ENCODE measurements at regions of chr1 and their contacts with region 1.

Region 1: DNA sequence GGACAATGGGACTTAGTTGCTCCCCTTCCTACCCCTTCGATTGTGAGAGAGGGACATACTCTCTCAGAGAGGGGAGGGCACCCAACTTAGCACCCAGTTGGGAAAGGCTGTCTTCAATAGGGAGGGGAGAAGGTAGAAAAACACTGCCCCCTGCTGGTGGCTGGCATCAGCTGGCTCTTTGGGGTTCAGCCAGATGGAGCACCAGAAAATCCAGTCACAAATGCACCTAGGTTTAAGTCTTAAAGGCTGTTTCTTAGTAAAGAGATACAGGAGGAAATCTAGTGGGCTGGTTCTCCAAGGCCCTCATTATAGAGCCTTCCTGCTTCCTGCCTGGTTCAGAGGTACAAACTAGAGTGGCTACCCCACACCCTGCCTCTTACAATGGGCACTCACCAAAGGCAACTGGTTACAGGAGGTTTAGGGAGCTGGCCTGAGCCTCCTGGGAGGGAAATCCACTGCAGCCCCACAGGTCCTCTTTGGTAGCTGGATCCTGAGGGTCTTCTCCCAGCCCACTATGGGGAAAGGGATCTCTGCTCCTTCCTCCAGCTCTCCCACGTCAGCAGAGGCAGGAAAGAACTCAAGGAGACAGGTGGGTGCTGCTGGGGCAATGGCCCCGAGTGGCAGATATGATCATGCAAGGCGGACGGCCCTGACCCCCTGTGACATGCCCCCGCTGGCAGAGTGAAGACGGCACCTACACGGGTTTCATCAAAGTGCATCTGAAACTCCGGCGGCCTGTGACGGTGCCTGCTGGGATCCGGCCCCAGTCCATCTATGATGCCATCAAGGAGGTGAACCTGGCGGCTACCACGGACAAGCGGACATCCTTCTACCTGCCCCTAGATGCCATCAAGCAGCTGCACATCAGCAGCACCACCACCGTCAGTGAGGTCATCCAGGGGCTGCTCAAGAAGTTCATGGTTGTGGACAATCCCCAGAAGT is 28.3 kb downstream of the EIF2D start:
- DNase-seq: peak; percentile 57 to 78 (median 74)
- H3K4me3 ChIP-seq: no peak overlapping the region
- H3K27ac ChIP-seq: no peak overlapping the region
- H3K4me1 ChIP-seq: peaks cover 4% of the 10 kb centered on the region
- H3K27me3 ChIP-seq: no peaks in the 10 kb centered on the region
- CTCF ChIP-seq: peak; percentile 48 to 63 (median 62)
- EP300 ChIP-seq: no peak
- POLR2A ChIP-seq: no peak

Region 2: GRCh38 chr1:206489980-206490770 is 93.8 kb before region 1 on chr1:
- intact Hi-C with region 1: loop called in 3 of 4 experiments (anchors 5 kb)
- DNase-seq: peak; percentile 70 to 85 (median 84)
- H3K4me3 ChIP-seq: no peak overlapping the region
- H3K27ac ChIP-seq: no peak overlapping the region
- H3K4me1 ChIP-seq: no peaks in the 10 kb centered on the region
- H3K27me3 ChIP-seq: no peaks in the 10 kb centered on the region
- CTCF ChIP-seq: peak; percentile 81 to 93 (median 88)
- EP300 ChIP-seq: no peak
- POLR2A ChIP-seq: no peak

Region 3: DNA sequence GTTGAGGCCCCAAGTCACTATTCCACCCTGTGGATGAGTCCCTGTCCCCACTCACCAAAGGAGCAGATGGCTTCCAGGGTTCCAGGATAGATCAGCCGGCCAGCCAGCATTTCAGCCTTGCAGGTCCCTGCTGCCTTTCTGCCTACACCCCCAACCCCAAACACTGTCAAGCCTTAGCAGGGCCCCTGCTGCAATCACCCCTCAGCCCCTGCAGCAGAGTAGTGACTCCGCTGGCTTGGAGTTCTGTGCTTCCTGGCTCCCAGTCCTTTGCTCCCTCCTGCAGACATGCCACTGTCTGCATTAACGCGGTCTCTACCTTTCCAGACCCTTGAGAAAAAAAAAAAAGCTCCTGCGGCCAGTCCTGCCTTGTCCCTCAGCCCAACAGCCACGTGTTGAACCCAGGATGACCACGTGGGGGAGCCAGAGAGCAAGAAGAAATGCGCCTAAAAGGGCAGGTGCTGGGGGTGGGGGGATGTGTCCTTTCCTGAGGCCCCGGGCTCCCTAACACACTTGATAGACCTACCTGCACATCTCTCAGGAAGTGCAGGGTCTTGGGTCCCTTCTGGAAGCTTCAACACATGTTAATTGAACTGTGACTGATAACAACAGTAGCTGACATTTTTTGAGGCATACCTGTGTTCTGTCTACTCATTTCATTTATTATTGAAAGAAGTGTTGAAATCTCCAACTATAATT is 39.3 kb before region 1 on chr1:
- intact Hi-C with region 1: loop called in 2 of 4 experiments (anchors 2 to 5 kb)
- DNase-seq: peak; percentile 55 to 80 (median 75)
- H3K4me3 ChIP-seq: no peak overlapping the region
- H3K27ac ChIP-seq: no peak overlapping the region
- H3K4me1 ChIP-seq: peaks cover 8% of the 10 kb centered on the region
- H3K27me3 ChIP-seq: no peaks in the 10 kb centered on the region
- CTCF ChIP-seq: peak; percentile 51 to 63 (median 52)
- EP300 ChIP-seq: no peak
- POLR2A ChIP-seq: no peak